IMR-90 (cell line): ENCODE measurements at regions of chr14 and their contacts with region 1.

Region 1: DNA sequence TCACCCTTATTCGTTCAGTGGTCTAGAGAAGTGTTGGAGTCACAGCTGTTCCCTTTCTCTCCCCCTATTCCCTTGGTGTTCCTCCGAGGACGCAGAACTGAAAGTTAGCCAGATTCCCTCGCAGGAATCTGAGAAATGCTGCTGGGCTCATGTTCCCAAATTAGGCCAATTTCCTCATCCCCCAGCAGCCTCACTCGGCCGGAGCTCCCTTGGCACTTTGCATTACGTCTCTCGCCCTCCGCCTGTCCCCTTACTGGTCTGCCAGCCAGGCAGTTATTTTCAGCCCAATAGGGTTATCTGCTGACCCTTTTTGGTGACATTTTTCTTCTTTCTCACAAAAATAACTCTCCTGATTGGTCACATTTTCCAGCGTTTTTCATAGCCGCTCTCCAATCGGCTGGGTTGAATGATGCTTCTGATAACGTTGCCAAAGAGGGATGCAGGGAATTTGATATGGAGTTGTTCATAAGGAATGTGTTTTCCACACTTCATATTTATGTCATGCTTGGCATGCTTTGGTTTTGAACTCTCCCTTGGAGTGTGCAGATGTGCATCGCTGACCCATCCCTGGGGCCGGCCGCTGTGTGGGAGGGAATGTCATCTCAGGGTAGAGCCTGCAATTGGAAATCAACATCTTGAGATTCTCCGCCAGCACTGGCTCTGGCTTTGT is 9.9 kb downstream of the IFT43 start:
- DNase-seq: peak; percentile 95
- ATAC-seq: peak; percentile 87
- H3K4me3 ChIP-seq: peak overlapping the region; percentile 3; the same call in 1 of the 2 replicates
- H3K27ac ChIP-seq: peak overlapping the region; percentile 93
- H3K4me1 ChIP-seq: peaks cover 11% of the 10 kb centered on the region
- H3K27me3 ChIP-seq: no peaks in the 10 kb centered on the region
- CTCF ChIP-seq: no peak
- POLR2A ChIP-seq: no peak
- RAD21 ChIP-seq: no peak

Region 2: GRCh38 chr14:76012354-76012753 is 16.8 kb after region 1 on chr14:
- CTCF ChIA-PET with region 1: no interaction called
- POLR2A ChIA-PET with region 1: interaction called, 4 read pairs
- dilution Hi-C with region 1: no loop called
- in situ Hi-C with region 1: no loop called
- intact Hi-C with region 1: loop called (anchors 1 kb)
- DNase-seq: peak; percentile 87
- ATAC-seq: peak; percentile 89
- H3K4me3 ChIP-seq: no peak overlapping the region
- H3K27ac ChIP-seq: peak overlapping the region; percentile 4; the same call in 1 of the 2 replicates
- H3K4me1 ChIP-seq: peaks cover 16% of the 10 kb centered on the region
- H3K27me3 ChIP-seq: no peaks in the 10 kb centered on the region
- CTCF ChIP-seq: 0 out of 2 replicates have a peak, but pooled peaks have one; percentile 10
- POLR2A ChIP-seq: no peak
- RAD21 ChIP-seq: peak; percentile 3; the same call in 1 of the 2 replicates